ENCODE measurements at regions of chr2 and their contacts with region 1.

Region 1: GRCh38 chr2:11778923-11779757 is 32.7 kb downstream of the LPIN1 start:
- DNase-seq: peak; percentile 90
- ATAC-seq: peak; percentile 93
- H3K4me3 Mint-ChIP-seq: peak overlapping the region; percentile 39
- H3K27ac Mint-ChIP-seq: peak overlapping the region; percentile 54
- H3K4me1 Mint-ChIP-seq: peaks cover 42% of the 10 kb centered on the region
- H3K27me3 Mint-ChIP-seq: no peaks in the 10 kb centered on the region

Region 2: DNA sequence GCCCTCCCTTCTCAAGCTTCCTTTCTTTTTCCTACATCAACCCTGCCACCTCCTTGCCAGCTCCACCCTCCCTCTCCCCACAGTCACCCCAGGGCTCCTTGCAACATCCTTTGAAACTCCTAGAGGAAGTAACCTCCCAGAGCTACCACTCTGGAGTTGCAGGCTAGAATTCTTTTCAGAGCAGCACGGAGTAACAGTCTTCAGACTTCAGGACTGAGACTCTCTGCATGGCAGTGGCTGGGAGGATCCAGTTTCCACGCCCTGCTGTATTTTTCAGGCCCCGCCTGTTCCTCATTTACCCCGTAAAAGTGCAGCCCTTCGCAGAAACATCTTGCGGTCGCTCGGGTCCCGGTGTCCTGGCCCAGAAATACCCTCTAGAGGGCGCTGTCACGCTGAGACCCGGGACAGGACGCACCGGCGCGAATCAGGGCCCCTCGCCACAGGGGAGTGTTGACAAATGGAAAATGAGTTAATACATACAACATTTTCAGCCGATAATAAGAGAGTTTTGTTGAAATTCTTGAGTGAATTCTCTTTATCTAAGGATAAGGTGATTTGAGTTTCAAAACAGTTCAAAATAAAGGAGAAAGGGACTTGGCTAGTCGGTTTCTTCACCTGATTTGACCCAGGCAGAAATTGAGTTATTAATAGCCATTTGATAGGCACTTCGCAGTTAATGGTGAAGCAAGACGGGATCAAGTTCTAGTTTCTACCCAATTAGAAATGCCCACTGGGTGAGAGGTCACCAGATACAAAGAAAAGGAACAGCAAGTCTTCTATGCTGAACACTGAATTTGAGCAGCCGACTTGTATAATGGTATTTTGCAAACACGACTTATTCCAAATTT is 90.7 kb before region 1 on chr2:
- CTCF ChIA-PET with region 1: interaction called, 138 read pairs
- POLR2A ChIA-PET with region 1: no interaction called
- DNase-seq: peak; percentile 94
- ATAC-seq: peak; percentile 98
- H3K4me3 Mint-ChIP-seq: peak overlapping the region; percentile 58
- H3K27ac Mint-ChIP-seq: peak overlapping the region; percentile 72
- H3K4me1 Mint-ChIP-seq: peaks cover 21% of the 10 kb centered on the region
- H3K27me3 Mint-ChIP-seq: peaks cover 15% of the 10 kb centered on the region

Region 3: GRCh38 chr2:11697103-11697871 is 81.9 kb before region 1 on chr2:
- CTCF ChIA-PET with region 1: interaction called, 138 read pairs
- POLR2A ChIA-PET with region 1: no interaction called
- DNase-seq: no peak
- ATAC-seq: no peak
- H3K4me3 Mint-ChIP-seq: no peak overlapping the region
- H3K27ac Mint-ChIP-seq: no peak overlapping the region
- H3K4me1 Mint-ChIP-seq: peaks cover 12% of the 10 kb centered on the region
- H3K27me3 Mint-ChIP-seq: peaks cover 2% of the 10 kb centered on the region

Region 4: GRCh38 chr2:11738589-11739436 is 40.3 kb before region 1 on chr2:
- CTCF ChIA-PET with region 1: interaction called, 251 read pairs
- POLR2A ChIA-PET with region 1: no interaction called
- DNase-seq: peak; percentile 46
- ATAC-seq: peak; percentile 80
- H3K4me3 Mint-ChIP-seq: no peak overlapping the region
- H3K27ac Mint-ChIP-seq: no peak overlapping the region
- H3K4me1 Mint-ChIP-seq: peaks cover 14% of the 10 kb centered on the region
- H3K27me3 Mint-ChIP-seq: peaks cover 11% of the 10 kb centered on the region

Region 5: GRCh38 chr2:11743846-11744553 is 35.1 kb before region 1 on chr2:
- CTCF ChIA-PET with region 1: interaction called, 251 read pairs
- POLR2A ChIA-PET with region 1: interaction called, 5 read pairs
- DNase-seq: peak; percentile 67
- ATAC-seq: peak; percentile 18
- H3K4me3 Mint-ChIP-seq: peak overlapping the region; percentile 61
- H3K27ac Mint-ChIP-seq: peak overlapping the region; percentile 89
- H3K4me1 Mint-ChIP-seq: peaks cover 51% of the 10 kb centered on the region
- H3K27me3 Mint-ChIP-seq: no peaks in the 10 kb centered on the region

Region 6: DNA sequence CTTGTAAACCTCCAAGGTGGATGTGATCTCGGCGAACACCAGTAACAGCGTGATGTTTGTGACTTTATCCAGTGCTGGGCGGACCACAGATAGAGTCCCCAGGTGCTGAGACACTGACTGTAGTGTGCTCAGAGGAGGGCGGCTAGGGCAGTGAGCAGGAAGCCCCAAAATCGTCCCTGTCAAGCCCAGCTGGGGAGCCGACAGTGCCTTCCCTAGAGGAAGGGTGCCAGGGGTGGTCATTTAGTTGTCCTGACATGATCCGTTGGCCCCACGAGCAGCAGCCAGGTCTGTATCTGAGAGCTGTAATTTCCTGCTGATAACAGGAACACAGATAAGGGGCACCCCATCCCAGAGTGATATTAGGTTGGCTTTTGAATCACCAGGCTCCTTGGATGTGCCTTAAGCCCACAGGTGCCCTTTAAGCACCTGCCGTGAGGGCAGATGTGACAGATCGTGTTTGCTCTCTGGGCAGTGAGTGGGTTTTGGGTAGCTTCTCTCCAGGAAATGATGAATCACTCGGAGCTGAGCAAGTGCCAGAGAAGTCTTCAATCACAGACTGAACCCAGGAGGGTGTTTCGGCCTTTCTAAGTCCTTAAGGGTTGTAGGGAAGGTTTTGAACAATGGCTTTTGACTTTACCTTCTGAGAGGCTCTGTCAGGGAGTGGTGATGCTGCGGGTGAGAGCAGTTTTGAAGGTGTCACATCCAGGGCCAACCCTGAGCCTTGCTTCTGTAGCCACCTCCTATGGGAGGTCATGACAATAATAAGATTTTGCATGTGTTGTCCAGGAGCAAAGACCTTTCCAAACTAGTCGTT is 25.0 kb before region 1 on chr2:
- CTCF ChIA-PET with region 1: interaction called, 251 read pairs
- POLR2A ChIA-PET with region 1: interaction called, 20 read pairs
- DNase-seq: peak; percentile 74
- ATAC-seq: peak; percentile 67
- H3K4me3 Mint-ChIP-seq: peak overlapping the region; percentile 73
- H3K27ac Mint-ChIP-seq: peak overlapping the region; percentile 93
- H3K4me1 Mint-ChIP-seq: peaks cover 93% of the 10 kb centered on the region
- H3K27me3 Mint-ChIP-seq: no peaks in the 10 kb centered on the region

Region 7: GRCh38 chr2:11812466-11813248 is 33.5 kb after region 1 on chr2:
- CTCF ChIA-PET with region 1: no interaction called
- POLR2A ChIA-PET with region 1: no interaction called
- DNase-seq: no peak
- ATAC-seq: no peak
- H3K4me3 Mint-ChIP-seq: no peak overlapping the region
- H3K27ac Mint-ChIP-seq: no peak overlapping the region
- H3K4me1 Mint-ChIP-seq: no peaks in the 10 kb centered on the region
- H3K27me3 Mint-ChIP-seq: no peaks in the 10 kb centered on the region

Measured in activated CD8-positive, alpha-beta T cell treated with anti-CD3 and anti-CD28 coated beads, Interleukin-2, amount 10 ng/mL, durations not matched to agents 7 days and 5 days (primary cell).